ENCODE measurements at regions of chr4 and their contacts with region 1.

Region 1: GRCh38 chr4:6783053-6783981 is 790 bp downstream of the KIAA0232 start:
- DNase-seq: peak; percentile 78 to 91 (median 88)
- ATAC-seq: peak; percentile 69 to 73
- H3K4me3 Mint-ChIP-seq: peak overlapping the region; percentile 82 to 92 (median 88)
- H3K27ac Mint-ChIP-seq: peak overlapping the region; percentile 68 to 96 (median 91)
- H3K4me1 Mint-ChIP-seq: peaks cover 41 to 74% (median 72%) of the 10 kb centered on the region in 4 donors
- H3K27me3 Mint-ChIP-seq: no peaks in the 10 kb centered on the region

Region 2: DNA sequence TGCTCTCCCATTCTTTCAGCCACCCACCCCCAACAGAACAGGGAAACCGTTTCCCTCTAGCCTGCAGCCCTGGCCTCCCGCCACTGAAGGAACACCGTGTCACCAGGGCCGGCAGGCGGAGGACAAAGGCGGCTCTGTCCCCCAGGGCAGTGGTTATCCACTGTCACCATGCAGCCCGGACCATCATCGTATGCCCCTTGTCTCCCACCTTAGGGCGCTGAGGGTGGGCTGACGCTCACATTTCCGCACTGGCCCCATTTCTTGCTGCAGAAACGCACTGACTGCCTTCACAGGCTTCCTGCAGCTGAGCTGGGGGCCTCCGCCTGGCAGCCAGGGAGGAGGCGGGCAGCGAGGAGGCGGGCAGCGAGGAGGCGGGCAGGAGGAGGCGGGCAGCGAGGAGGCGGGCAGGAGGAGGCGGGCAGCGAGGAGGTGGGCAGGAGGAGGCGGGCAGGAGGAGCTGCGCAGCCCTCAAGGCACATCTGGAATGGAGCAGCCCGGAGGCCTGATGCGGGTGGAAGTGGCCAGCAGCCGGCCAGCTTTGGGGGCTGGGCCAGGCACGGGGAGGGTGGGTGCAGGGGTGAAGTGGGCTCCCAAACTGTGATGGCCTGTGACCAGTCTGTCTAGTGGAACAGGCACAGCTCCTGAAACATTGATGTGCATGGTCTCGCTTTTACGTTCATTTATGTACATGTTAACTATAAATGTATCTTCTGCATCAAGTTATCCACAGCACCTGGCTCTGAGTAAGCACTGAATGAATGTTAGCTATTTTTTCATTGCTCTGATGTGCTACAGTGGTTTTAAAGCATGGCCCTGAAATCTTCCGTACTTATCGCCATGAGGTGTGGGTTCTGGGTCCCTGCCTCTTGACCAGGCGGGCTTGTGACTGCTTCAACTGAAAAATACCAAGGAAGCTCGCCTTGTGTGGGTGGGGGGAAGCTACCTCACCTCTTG is 21.4 kb before region 1 on chr4:
- POLR2A ChIA-PET with region 1: interaction called, 82 read pairs
- DNase-seq: peak in 3 of 10 donors; percentile 17 to 46 (median 29)
- ATAC-seq: peak; percentile 44 to 92
- H3K4me3 Mint-ChIP-seq: peak overlapping the region; percentile 37 to 77 (median 71)
- H3K27ac Mint-ChIP-seq: peak overlapping the region in 9 of 10 donors; percentile 35 to 91 (median 78)
- H3K4me1 Mint-ChIP-seq: peaks cover 15 to 47% (median 22%) of the 10 kb centered on the region in 4 donors
- H3K27me3 Mint-ChIP-seq: peaks cover 0 to 2% (median 0%) of the 10 kb centered on the region in 5 donors

Region 3: GRCh38 chr4:6768539-6768905 is 14.8 kb before region 1 on chr4:
- POLR2A ChIA-PET with region 1: interaction called, 82 read pairs
- DNase-seq: no peak
- ATAC-seq: no peak
- H3K4me3 Mint-ChIP-seq: peak overlapping the region in 5 of 10 donors; percentile 45 to 62 (median 47)
- H3K27ac Mint-ChIP-seq: peak overlapping the region in 7 of 10 donors; percentile 39 to 90 (median 60)
- H3K4me1 Mint-ChIP-seq: peaks cover 12 to 62% (median 36%) of the 10 kb centered on the region in 4 donors
- H3K27me3 Mint-ChIP-seq: no peaks in the 10 kb centered on the region